ENCODE measurements at regions of chr3 and their contacts with region 1.

Region 1: GRCh38 chr3:42476225-42477125 is 26.0 kb upstream of the VIPR1 start:
- DNase-seq: peak; percentile 95
- ATAC-seq: peak; percentile 95
- H3K4me3 ChIP-seq: peak overlapping the region; percentile 14; the same call in 1 of the 2 replicates
- H3K27ac ChIP-seq: peak overlapping the region; percentile 61
- H3K4me1 ChIP-seq: peaks cover 22% of the 10 kb centered on the region
- H3K27me3 ChIP-seq: no peaks in the 10 kb centered on the region
- CTCF ChIP-seq: no peak

Region 2: GRCh38 chr3:42290966-42291714 is 185.3 kb before region 1 on chr3:
- CTCF ChIA-PET with region 1: no interaction called
- POLR2A ChIA-PET with region 1: no interaction called
- intact Hi-C with region 1: no loop called
- DNase-seq: no peak
- ATAC-seq: no peak
- H3K4me3 ChIP-seq: no peak overlapping the region
- H3K27ac ChIP-seq: no peak overlapping the region
- H3K4me1 ChIP-seq: no peaks in the 10 kb centered on the region
- H3K27me3 ChIP-seq: peaks cover 18% of the 10 kb centered on the region
- CTCF ChIP-seq: no peak

Region 3: GRCh38 chr3:42490243-42490642 is 13.8 kb after region 1 on chr3:
- CTCF ChIA-PET with region 1: interaction called, 4 read pairs
- POLR2A ChIA-PET with region 1: no interaction called
- intact Hi-C with region 1: loop called (anchors 1 kb)
- DNase-seq: peak; percentile 96
- ATAC-seq: peak; percentile 100
- H3K4me3 ChIP-seq: no peak overlapping the region
- H3K27ac ChIP-seq: peak overlapping the region; percentile 67
- H3K4me1 ChIP-seq: peaks cover 24% of the 10 kb centered on the region
- H3K27me3 ChIP-seq: no peaks in the 10 kb centered on the region
- CTCF ChIP-seq: no peak